ENCODE measurements at regions of chr2 and their contacts with region 1.

Region 1: GRCh38 chr2:16750175-16750924 is 84.7 kb upstream of the CYRIA start:
- DNase-seq: no peak
- CTCF ChIP-seq: no peak

Region 2: GRCh38 chr2:16496426-16497388 is 253.6 kb before region 1 on chr2:
- in situ Hi-C with region 1: no loop called
- DNase-seq: no peak
- CTCF ChIP-seq: no peak

Region 3: GRCh38 chr2:16623031-16623430 is 127.3 kb before region 1 on chr2:
- in situ Hi-C with region 1: loop called (anchors 5 kb)
- DNase-seq: no peak
- CTCF ChIP-seq: no peak

Region 4: DNA sequence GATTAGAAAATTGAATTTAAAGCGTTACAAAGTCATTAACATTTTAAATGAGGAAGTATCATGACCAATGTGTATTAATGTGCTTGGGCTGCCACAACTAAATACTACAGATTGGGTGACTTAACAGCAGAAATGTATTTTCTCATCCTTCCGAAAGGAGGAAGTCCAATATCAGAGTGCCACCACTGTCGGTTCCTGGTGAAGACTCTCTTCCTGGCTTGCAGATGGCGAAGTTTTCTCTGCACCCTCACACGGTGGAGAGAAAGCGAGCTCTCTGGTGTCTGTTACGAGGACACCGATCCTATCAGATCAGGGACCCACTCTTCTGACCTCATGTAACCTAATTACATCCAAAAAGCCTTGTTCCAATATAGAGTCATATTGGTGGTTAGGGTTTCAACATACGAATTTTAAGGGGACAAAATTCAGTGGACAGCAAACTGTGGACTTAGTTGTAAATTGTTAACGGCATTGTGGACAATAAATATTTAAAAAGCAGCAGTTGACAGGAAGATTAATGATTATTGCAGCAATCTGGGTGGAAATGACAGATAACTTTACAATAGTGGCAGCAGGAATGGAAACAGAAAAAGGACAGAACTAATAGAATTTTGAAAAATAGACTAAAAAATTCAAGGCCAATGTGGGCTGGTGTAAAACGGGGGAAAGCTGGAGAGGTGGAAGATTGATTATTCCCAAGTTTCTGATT is 49.6 kb before region 1 on chr2:
- in situ Hi-C with region 1: no loop called
- DNase-seq: no peak
- CTCF ChIP-seq: no peak